ENCODE measurements at regions of chr16 and their contacts with region 1.

Region 1: GRCh38 chr16:4475880-4476788 is at the start of gene HMOX2:
- DNase-seq: peak; percentile 85 to 98 (median 92)
- ATAC-seq: peak; percentile 95
- H3K4me3 ChIP-seq: peak within 1 kb of the TSS; percentile 89
- H3K4me3 Mint-ChIP-seq: peak within 1 kb of the TSS; percentile 90 to 96 (median 94)
- H3K27ac ChIP-seq: peak within 1 kb of the TSS; percentile 92
- H3K27ac Mint-ChIP-seq: peak within 1 kb of the TSS; percentile 83 to 95 (median 91)
- H3K4me1 ChIP-seq: peaks cover 29 to 38% of the 10 kb centered on the region in 2 donors
- H3K4me1 Mint-ChIP-seq: peaks cover 25 to 53% (median 40%) of the 10 kb centered on the region in 7 donors
- H3K27me3 ChIP-seq: no peaks in the 10 kb centered on the region
- H3K27me3 Mint-ChIP-seq: no peaks in the 10 kb centered on the region
- total RNA-seq, gene HMOX2: 44.6 to 84.9 (median 61.0) TPM

Region 2: DNA sequence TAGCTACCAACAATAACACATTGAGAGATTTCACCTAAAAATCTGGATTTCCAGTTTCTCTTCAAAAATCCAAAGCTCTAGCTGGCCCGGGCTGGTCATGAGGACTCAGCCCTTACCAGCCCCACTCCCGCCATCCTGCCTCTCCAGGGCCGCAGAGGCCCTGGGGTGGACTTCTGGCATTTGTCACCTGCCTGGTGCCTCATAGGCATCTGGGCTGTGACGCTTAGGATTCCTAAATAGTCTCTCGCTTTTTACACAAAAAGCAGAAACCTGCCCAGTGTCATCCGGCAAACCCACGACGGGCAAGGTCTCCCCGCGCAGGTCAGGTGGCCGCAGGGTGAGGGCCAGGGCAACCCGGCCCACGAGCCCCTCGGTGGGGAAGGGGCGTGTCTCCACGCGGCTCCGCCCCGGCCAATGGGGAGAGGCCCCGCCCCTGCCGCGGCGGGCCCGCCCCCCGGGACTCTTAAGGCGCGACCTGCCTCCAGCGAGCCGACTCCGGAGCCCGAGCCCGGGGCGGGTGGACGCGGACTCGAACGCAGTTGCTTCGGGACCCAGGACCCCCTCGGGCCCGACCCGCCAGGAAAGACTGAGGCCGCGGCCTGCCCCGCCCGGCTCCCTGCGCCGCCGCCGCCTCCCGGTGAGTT is 104.7 kb before region 1 on chr16 and contains the start of gene VASN:
- CTCF ChIA-PET with region 1: no interaction called
- POLR2A ChIA-PET with region 1: no interaction called
- intact Hi-C with region 1: loop called in 1 of 2 experiments (anchors 5 kb)
- DNase-seq: peak; percentile 68 to 84 (median 78)
- ATAC-seq: peak; percentile 89
- H3K4me3 ChIP-seq: peak within 1 kb of the TSS; percentile 51
- H3K4me3 Mint-ChIP-seq: peak within 1 kb of the TSS; percentile 61 to 88 (median 81)
- H3K27ac ChIP-seq: peak within 1 kb of the TSS; percentile 58
- H3K27ac Mint-ChIP-seq: peak within 1 kb of the TSS in 6 of 9 donors; percentile 43 to 74 (median 66)
- H3K4me1 ChIP-seq: peaks cover 15 to 19% of the 10 kb centered on the region in 2 donors
- H3K4me1 Mint-ChIP-seq: peaks cover 0 to 24% (median 12%) of the 10 kb centered on the region in 7 donors
- H3K27me3 ChIP-seq: no peaks in the 10 kb centered on the region
- H3K27me3 Mint-ChIP-seq: no peaks in the 10 kb centered on the region
- total RNA-seq, gene VASN: 0.24 to 1.3 (median 0.45) TPM in 4 of 5 experiments, not detected in the other

Region 3: GRCh38 chr16:4425378-4426020 is 50.6 kb before region 1 on chr16 and contains the start of gene DNAJA3:
- CTCF ChIA-PET with region 1: interaction called, 3 read pairs
- POLR2A ChIA-PET with region 1: interaction called, 3 read pairs
- intact Hi-C with region 1: loop called (anchors 1 to 2 kb)
- DNase-seq: peak; percentile 91 to 97 (median 95)
- ATAC-seq: peak; percentile 93
- H3K4me3 ChIP-seq: peak within 1 kb of the TSS; percentile 97
- H3K4me3 Mint-ChIP-seq: peak within 1 kb of the TSS; percentile 92 to 99 (median 98)
- H3K27ac ChIP-seq: peak within 1 kb of the TSS; percentile 95
- H3K27ac Mint-ChIP-seq: peak within 1 kb of the TSS; percentile 99 to 100 (median 100)
- H3K4me1 ChIP-seq: peaks cover 18% of the 10 kb centered on the region in 2 donors
- H3K4me1 Mint-ChIP-seq: peaks cover 26 to 37% (median 31%) of the 10 kb centered on the region in 7 donors
- H3K27me3 ChIP-seq: no peaks in the 10 kb centered on the region
- H3K27me3 Mint-ChIP-seq: peaks cover 0 to 4% (median 0%) of the 10 kb centered on the region in 5 donors
- total RNA-seq, gene DNAJA3: 33.6 to 79.8 (median 70.5) TPM

Region 4: GRCh38 chr16:4494746-4495490 is 18.8 kb after region 1 on chr16:
- CTCF ChIA-PET with region 1: interaction called, 14 read pairs
- POLR2A ChIA-PET with region 1: interaction called, 216 read pairs
- intact Hi-C with region 1: no loop called
- DNase-seq: no peak
- ATAC-seq: no peak
- H3K4me3 ChIP-seq: no peak overlapping the region
- H3K4me3 Mint-ChIP-seq: peak overlapping the region in 5 of 10 donors; percentile 16 to 58 (median 52)
- H3K27ac ChIP-seq: peak overlapping the region; percentile 14
- H3K27ac Mint-ChIP-seq: peak overlapping the region in 8 of 9 donors; percentile 72 to 94 (median 86)
- H3K4me1 ChIP-seq: peaks cover 35 to 77% of the 10 kb centered on the region in 2 donors
- H3K4me1 Mint-ChIP-seq: peaks cover 32 to 95% (median 84%) of the 10 kb centered on the region in 7 donors
- H3K27me3 ChIP-seq: no peaks in the 10 kb centered on the region
- H3K27me3 Mint-ChIP-seq: no peaks in the 10 kb centered on the region

Region 5: GRCh38 chr16:4506450-4506849 is 30.3 kb after region 1 on chr16:
- CTCF ChIA-PET with region 1: interaction called, 71 read pairs
- POLR2A ChIA-PET with region 1: interaction called, 216 read pairs
- intact Hi-C with region 1: loop called (anchors 1 kb)
- DNase-seq: peak in 8 of 9 donors; percentile 40 to 75 (median 65)
- ATAC-seq: peak; percentile 58
- H3K4me3 ChIP-seq: peak overlapping the region; percentile 55
- H3K4me3 Mint-ChIP-seq: peak overlapping the region; percentile 71 to 87 (median 80)
- H3K27ac ChIP-seq: peak overlapping the region; percentile 93
- H3K27ac Mint-ChIP-seq: peak overlapping the region; percentile 94 to 100 (median 99)
- H3K4me1 ChIP-seq: peaks cover 40 to 58% of the 10 kb centered on the region in 2 donors
- H3K4me1 Mint-ChIP-seq: peaks cover 39 to 77% (median 60%) of the 10 kb centered on the region in 7 donors
- H3K27me3 ChIP-seq: no peaks in the 10 kb centered on the region
- H3K27me3 Mint-ChIP-seq: no peaks in the 10 kb centered on the region

Region 6: DNA sequence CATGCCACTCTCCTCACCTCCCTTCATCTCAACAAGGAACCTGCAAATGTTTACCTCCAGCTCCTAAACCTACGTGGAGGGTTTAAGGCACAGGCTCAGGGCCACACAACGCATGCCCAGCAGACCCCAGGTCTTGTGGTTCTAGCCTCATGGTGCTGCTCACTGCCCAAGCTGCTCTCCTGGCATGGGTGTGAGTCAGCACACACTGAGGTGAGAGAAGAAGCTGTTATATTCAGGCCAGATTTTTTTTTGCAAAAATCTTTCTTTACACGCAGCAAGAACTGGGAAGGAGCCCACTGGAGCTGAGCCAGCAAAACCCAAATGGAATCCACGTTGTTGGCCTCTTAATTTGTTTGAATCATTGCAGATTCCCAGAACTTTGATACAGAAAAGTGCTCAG is 74.5 kb after region 1 on chr16:
- CTCF ChIA-PET with region 1: interaction called, 4 read pairs
- POLR2A ChIA-PET with region 1: interaction called, 6 read pairs
- intact Hi-C with region 1: loop called (anchors 1 kb)
- DNase-seq: no peak
- ATAC-seq: no peak
- H3K4me3 ChIP-seq: no peak overlapping the region
- H3K4me3 Mint-ChIP-seq: no peak overlapping the region
- H3K27ac ChIP-seq: no peak overlapping the region
- H3K27ac Mint-ChIP-seq: peak overlapping the region in 1 of 9 donors; percentile 36
- H3K4me1 ChIP-seq: peaks cover 0 to 7% of the 10 kb centered on the region in 2 donors
- H3K4me1 Mint-ChIP-seq: peaks cover 0 to 10% (median 5%) of the 10 kb centered on the region in 7 donors
- H3K27me3 ChIP-seq: no peaks in the 10 kb centered on the region
- H3K27me3 Mint-ChIP-seq: peaks cover 0 to 6% (median 0%) of the 10 kb centered on the region in 5 donors